ENCODE measurements at regions of chr7 and their contacts with region 1.

Region 1: GRCh38 chr7:24665564-24666294 is 91.5 kb downstream of the GSDME start:
- DNase-seq: peak in 1 of 2 donors; percentile 72
- ATAC-seq: peak in 2 of 3 donors; percentile 47 to 54
- H3K4me3 ChIP-seq: no peak overlapping the region
- H3K4me3 Mint-ChIP-seq: no peak overlapping the region
- H3K27ac ChIP-seq: no peak overlapping the region
- H3K27ac Mint-ChIP-seq: no peak overlapping the region
- H3K4me1 ChIP-seq: no peaks in the 10 kb centered on the region
- H3K4me1 Mint-ChIP-seq: no peaks in the 10 kb centered on the region
- H3K27me3 ChIP-seq: no peaks in the 10 kb centered on the region
- H3K27me3 Mint-ChIP-seq: no peaks in the 10 kb centered on the region
- CTCF ChIP-seq: peak; percentile 84

Region 2: DNA sequence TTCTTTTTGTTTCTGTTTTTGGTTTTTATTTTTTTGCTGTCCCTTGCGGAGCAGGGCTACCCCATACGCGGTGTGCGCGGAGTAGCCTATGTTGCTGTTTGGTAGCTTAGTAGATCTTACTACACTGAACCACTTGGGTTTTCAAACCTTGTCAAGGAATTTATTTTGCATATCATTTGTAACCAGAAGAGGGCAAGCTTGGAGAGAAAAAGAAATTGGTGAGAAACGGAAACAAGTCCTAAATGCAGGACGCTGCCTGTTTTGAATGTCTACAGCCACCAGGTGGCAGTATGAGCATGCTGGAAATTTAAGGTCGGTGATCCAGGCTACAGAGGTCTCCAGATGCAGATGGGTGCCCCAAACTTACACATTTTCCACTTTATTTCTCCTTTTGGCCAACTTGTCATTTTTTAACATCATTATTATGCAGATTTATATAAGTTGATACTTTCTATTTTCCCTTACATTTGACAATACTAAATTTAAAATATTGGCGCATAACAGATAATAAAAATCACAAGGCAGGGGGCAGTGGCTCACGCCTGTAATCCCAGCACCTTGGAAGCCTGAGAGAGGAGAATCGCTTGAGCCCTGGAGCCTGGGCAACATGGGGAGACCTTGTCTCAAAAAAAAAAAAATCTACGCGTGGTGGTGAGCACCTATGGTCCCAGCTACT is 1118.7 kb before region 1 on chr7:
- intact Hi-C with region 1: loop called (anchors 10 kb)
- DNase-seq: peak; percentile 57 to 94
- ATAC-seq: peak; percentile 96 to 97 (median 96)
- H3K4me3 ChIP-seq: no peak overlapping the region
- H3K4me3 Mint-ChIP-seq: no peak overlapping the region
- H3K27ac ChIP-seq: no peak overlapping the region
- H3K27ac Mint-ChIP-seq: no peak overlapping the region
- H3K4me1 ChIP-seq: peaks cover 4% of the 10 kb centered on the region
- H3K4me1 Mint-ChIP-seq: no peaks in the 10 kb centered on the region
- H3K27me3 ChIP-seq: no peaks in the 10 kb centered on the region
- H3K27me3 Mint-ChIP-seq: no peaks in the 10 kb centered on the region
- CTCF ChIP-seq: peak; percentile 95

Region 3: DNA sequence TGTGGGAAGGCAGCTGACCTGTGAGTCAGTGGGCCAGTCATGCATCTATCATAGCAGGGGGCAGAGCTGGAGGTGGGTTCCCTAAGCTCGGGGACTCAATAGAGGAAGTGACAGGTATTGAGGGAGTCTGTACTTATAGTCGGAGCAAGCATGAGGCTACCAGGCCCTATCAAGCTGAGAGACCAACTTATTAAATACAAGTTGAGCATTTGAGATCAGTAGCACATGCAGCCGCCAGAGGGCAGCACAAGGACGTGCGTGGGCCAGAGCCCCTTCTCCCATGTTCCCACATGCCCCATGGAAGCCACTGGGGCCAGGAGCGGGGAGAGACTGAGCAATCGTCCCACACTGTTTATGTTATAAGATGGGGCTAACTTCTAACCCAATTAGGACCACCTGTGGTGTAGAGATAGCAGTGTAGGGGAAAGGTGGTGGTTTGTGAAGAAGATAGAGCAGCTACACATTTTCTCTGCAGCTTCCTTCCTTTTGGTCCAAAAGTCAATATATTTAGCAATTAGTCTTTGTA is 968.8 kb before region 1 on chr7:
- intact Hi-C with region 1: loop called (anchors 5 kb)
- DNase-seq: peak; percentile 50 to 76
- ATAC-seq: peak; percentile 71 to 75 (median 75)
- H3K4me3 ChIP-seq: no peak overlapping the region
- H3K4me3 Mint-ChIP-seq: no peak overlapping the region
- H3K27ac ChIP-seq: no peak overlapping the region
- H3K27ac Mint-ChIP-seq: no peak overlapping the region
- H3K4me1 ChIP-seq: no peaks in the 10 kb centered on the region
- H3K4me1 Mint-ChIP-seq: peaks cover 7 to 9% of the 10 kb centered on the region in 2 donors
- H3K27me3 ChIP-seq: no peaks in the 10 kb centered on the region
- H3K27me3 Mint-ChIP-seq: no peaks in the 10 kb centered on the region
- CTCF ChIP-seq: peak; percentile 79

Region 4: GRCh38 chr7:23863209-23863798 is 802.4 kb before region 1 on chr7:
- intact Hi-C with region 1: loop called (anchors 1 kb)
- DNase-seq: peak in 1 of 2 donors; percentile 51
- ATAC-seq: no peak
- H3K4me3 ChIP-seq: no peak overlapping the region
- H3K4me3 Mint-ChIP-seq: no peak overlapping the region
- H3K27ac ChIP-seq: no peak overlapping the region
- H3K27ac Mint-ChIP-seq: no peak overlapping the region
- H3K4me1 ChIP-seq: no peaks in the 10 kb centered on the region
- H3K4me1 Mint-ChIP-seq: no peaks in the 10 kb centered on the region
- H3K27me3 ChIP-seq: no peaks in the 10 kb centered on the region
- H3K27me3 Mint-ChIP-seq: peaks cover 6 to 24% of the 10 kb centered on the region in 2 donors
- CTCF ChIP-seq: peak; percentile 36

Region 5: GRCh38 chr7:24290004-24290641 is 375.6 kb before region 1 on chr7:
- intact Hi-C with region 1: loop called (anchors 1 kb)
- DNase-seq: peak in 1 of 2 donors; percentile 62
- ATAC-seq: peak; percentile 82 to 93 (median 87)
- H3K4me3 ChIP-seq: no peak overlapping the region
- H3K4me3 Mint-ChIP-seq: no peak overlapping the region
- H3K27ac ChIP-seq: no peak overlapping the region
- H3K27ac Mint-ChIP-seq: no peak overlapping the region
- H3K4me1 ChIP-seq: no peaks in the 10 kb centered on the region
- H3K4me1 Mint-ChIP-seq: peaks cover 6 to 7% of the 10 kb centered on the region in 2 donors
- H3K27me3 ChIP-seq: peaks cover 5% of the 10 kb centered on the region
- H3K27me3 Mint-ChIP-seq: peaks cover 20 to 58% of the 10 kb centered on the region in 2 donors
- CTCF ChIP-seq: peak; percentile 42

Region 6: DNA sequence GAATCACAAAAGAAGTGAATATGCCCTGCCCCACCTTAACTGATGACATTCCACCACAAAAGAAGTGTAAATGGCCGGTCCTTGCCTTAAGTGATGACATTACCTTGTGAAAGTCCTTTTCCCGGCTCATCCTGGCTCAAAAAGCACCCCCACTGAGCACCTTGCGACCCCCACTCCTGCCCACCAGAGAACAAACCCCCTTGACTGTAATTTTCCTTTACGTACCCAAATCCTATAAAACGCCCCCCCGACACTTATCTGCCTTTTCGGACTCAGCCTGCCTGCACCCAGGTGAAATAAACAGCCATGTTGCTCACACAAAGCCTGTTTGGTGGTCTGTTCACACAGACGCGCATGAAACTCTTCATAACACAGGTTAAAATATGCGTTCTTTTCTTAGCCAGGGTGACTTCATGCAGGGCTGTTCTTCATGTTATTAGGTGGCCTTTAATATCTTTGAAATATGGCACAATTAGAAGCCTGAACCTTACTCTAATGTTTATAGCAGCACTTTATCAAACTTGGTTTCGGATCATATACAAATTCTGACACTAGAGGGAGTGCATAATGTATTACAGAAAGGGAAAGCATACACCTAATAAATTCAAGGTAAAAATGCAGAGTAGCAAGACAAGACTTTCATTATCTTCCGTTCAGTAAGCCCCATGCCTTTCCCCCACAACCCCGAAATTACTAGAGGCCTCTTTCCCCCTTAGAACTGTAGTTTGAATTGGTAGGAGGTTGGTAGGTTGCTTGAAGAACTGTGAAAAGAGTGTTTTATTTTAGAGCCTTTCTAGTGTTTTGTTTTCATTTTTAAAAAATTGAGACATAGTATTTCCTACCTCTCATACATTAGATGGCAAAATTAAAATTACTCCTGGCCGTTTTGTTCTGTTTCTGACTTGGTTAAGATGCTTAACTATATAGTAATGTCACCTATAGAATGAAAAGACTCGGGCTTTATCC is 263.8 kb before region 1 on chr7:
- intact Hi-C with region 1: loop called (anchors 1 kb)
- DNase-seq: peak in 1 of 2 donors; percentile 41
- ATAC-seq: peak in 1 of 3 donors; percentile 43
- H3K4me3 ChIP-seq: no peak overlapping the region
- H3K4me3 Mint-ChIP-seq: no peak overlapping the region
- H3K27ac ChIP-seq: no peak overlapping the region
- H3K27ac Mint-ChIP-seq: no peak overlapping the region
- H3K4me1 ChIP-seq: no peaks in the 10 kb centered on the region
- H3K4me1 Mint-ChIP-seq: peaks cover 18 to 19% of the 10 kb centered on the region in 2 donors
- H3K27me3 ChIP-seq: no peaks in the 10 kb centered on the region
- H3K27me3 Mint-ChIP-seq: peaks cover 0 to 14% of the 10 kb centered on the region in 2 donors
- CTCF ChIP-seq: peak; percentile 31

Region 7: DNA sequence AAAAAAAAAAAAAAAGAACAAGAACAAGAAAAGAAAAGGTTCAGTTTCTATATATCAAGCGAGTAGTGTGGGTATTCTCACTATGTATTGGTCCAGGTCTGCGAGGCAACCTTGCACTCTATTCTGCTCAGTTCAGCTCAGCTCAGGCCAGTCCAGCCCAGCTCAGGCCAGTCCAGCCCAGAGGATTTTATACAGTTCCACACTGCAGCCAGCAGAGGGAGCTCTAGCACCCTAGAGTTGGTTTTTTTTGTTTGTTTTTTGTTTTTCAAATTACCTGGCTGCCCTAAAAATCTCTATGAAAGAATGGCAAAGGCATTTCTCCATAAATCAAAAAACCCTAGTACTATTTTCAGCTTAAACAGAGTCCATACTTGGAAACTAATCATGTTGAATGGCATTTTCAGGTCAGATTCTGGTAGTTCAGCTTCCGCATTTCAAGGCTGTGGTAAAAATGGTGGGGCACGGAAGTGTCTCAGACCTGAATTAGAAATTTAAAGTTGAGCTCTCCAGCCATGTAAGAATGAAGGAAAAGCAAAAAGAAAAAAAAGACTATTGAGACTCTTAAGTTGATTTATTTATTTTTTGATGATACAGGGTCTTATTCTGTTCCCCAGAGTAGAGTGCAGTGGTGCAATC is 146.7 kb after region 1 on chr7:
- intact Hi-C with region 1: no loop called
- DNase-seq: peak; percentile 47 to 77
- ATAC-seq: peak; percentile 81 to 90 (median 86)
- H3K4me3 ChIP-seq: no peak overlapping the region
- H3K4me3 Mint-ChIP-seq: no peak overlapping the region
- H3K27ac ChIP-seq: no peak overlapping the region
- H3K27ac Mint-ChIP-seq: peak overlapping the region in 1 of 2 donors; percentile 22
- H3K4me1 ChIP-seq: no peaks in the 10 kb centered on the region
- H3K4me1 Mint-ChIP-seq: no peaks in the 10 kb centered on the region
- H3K27me3 ChIP-seq: no peaks in the 10 kb centered on the region
- H3K27me3 Mint-ChIP-seq: no peaks in the 10 kb centered on the region
- CTCF ChIP-seq: peak; percentile 97